Left colon (tissue), 2 donors: ENCODE measurements at regions of chr20 and their contacts with region 1.

Region 1: DNA sequence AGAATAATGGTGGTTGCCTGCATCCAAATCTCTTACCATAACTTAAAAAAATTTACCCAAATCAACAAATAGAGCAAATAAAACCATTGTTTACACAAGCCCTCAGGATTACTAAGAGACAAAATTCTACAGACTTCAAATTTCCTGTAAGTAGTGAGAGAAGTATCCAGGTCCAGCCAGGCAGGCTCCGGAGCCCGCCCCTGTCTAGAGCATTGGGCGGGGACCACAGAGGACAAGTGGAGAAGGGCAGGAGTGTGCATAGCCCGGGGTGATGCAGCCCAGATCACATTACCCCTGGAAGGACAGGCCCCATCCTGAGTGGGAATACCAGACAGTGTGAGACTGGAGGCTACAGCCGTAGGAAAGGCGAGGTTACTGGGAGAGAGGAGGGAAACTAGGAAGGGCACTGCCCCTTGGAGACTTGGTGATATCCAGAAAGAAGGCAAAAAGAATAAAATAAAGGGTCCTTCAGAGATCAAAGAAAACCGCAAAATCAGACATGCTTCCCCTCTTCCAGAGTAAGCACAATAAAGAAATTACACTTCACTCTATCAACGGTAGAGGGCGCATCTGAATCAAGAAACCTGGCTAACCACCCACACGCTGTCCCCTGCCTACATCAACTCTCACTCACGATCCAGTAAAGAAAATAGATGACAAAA is 26.6 kb downstream of the RIN2 start:
- DNase-seq: peak; percentile 41 to 47
- ATAC-seq: peak; percentile 80

Region 2: GRCh38 chr20:19692685-19693119 is 91.9 kb before region 1 on chr20:
- intact Hi-C with region 1: loop called in 1 of 2 experiments (anchors 10 kb)
- DNase-seq: peak in 1 of 2 donors; percentile 68
- ATAC-seq: peak; percentile 49